Activated CD4-positive, alpha-beta memory T cell treated with anti-CD3 and anti-CD28 coated beads for 36 hours (primary cell): ENCODE measurements at regions of chr12 and their contacts with region 1.

Region 1: DNA sequence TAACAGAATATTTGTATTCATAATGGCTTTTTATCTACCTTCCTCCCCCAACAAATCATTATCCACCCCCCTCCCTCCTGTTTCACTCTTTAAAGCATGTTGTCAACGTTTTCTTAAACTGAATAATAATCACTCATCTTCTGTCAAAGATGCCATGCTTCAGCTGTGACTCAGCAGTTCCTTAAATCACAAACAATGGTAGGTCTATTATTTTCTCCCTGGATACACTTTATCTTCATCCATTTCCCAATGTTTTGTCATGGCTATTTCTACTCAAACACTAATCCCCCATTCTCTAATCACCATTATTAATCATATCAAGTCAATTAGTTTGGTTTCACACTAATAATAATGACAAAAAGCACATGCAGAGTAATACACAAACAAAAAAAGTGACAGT is 6.5 kb downstream of the CLEC12B start:
- DNase-seq: no peak
- H3K4me3 Mint-ChIP-seq: no peak overlapping the region
- H3K27ac Mint-ChIP-seq: no peak overlapping the region
- H3K4me1 Mint-ChIP-seq: no peaks in the 10 kb centered on the region
- H3K27me3 Mint-ChIP-seq: peaks cover 7% of the 10 kb centered on the region

Region 2: GRCh38 chr12:9940375-9940774 is 76.5 kb before region 1 on chr12:
- CTCF ChIA-PET with region 1: no interaction called
- POLR2A ChIA-PET with region 1: no interaction called
- intact Hi-C with region 1: loop called (anchors 5 kb)
- DNase-seq: no peak
- H3K4me3 Mint-ChIP-seq: no peak overlapping the region
- H3K27ac Mint-ChIP-seq: no peak overlapping the region
- H3K4me1 Mint-ChIP-seq: peaks cover 16% of the 10 kb centered on the region
- H3K27me3 Mint-ChIP-seq: peaks cover 4% of the 10 kb centered on the region